ENCODE measurements at regions of chr20 and their contacts with region 1.

Region 1: GRCh38 chr20:38221119-38221589 is 39.4 kb downstream of the KIAA1755 start:
- DNase-seq: peak; percentile 70
- H3K4me3 Mint-ChIP-seq: no peak overlapping the region
- H3K27ac Mint-ChIP-seq: no peak overlapping the region
- H3K4me1 Mint-ChIP-seq: peaks cover 21% of the 10 kb centered on the region
- H3K27me3 Mint-ChIP-seq: no peaks in the 10 kb centered on the region
- CTCF ChIP-seq: peak; percentile 92

Region 2: DNA sequence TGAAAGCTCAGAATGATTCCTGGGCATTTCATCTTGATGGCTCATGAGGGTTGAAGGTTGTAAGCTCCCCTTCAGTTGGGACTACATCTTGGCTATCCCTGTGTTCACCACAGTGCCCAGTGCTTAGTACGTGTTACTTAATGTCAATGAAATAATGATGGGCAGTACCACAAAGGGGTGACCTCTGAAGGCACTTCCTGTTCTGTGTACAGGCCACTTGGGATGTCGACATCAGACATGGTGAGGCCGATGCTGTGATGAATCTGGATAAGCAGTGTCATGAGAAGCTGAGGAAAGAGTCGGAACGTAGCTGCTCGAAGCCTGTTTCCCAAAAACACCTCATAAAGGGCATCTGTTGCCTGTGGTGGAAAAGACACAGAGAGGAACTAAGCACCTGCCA is 1097.7 kb before region 1 on chr20:
- CTCF ChIA-PET with region 1: no interaction called
- POLR2A ChIA-PET with region 1: no interaction called
- intact Hi-C with region 1: no loop called
- DNase-seq: no peak
- H3K4me3 Mint-ChIP-seq: no peak overlapping the region
- H3K27ac Mint-ChIP-seq: no peak overlapping the region
- H3K4me1 Mint-ChIP-seq: no peaks in the 10 kb centered on the region
- H3K27me3 Mint-ChIP-seq: peaks cover 8% of the 10 kb centered on the region
- CTCF ChIP-seq: no peak

Region 3: GRCh38 chr20:38033310-38034107 is 187.6 kb before region 1 on chr20 and contains the starts of genes RPRD1B and TTI1:
- CTCF ChIA-PET with region 1: interaction called, 35 read pairs
- POLR2A ChIA-PET with region 1: interaction called, 4 read pairs
- intact Hi-C with region 1: no loop called
- DNase-seq: peak; percentile 92
- H3K4me3 Mint-ChIP-seq: peak within 1 kb of the TSS; percentile 82
- H3K27ac Mint-ChIP-seq: peak within 1 kb of the TSS; percentile 92
- H3K4me1 Mint-ChIP-seq: peaks cover 41% of the 10 kb centered on the region
- H3K27me3 Mint-ChIP-seq: no peaks in the 10 kb centered on the region
- CTCF ChIP-seq: no peak
- total RNA-seq, gene RPRD1B: 42.6 and 53.0 TPM in 2 replicates
- total RNA-seq, gene TTI1: 17.1 and 18.3 TPM in 2 replicates

Region 4: DNA sequence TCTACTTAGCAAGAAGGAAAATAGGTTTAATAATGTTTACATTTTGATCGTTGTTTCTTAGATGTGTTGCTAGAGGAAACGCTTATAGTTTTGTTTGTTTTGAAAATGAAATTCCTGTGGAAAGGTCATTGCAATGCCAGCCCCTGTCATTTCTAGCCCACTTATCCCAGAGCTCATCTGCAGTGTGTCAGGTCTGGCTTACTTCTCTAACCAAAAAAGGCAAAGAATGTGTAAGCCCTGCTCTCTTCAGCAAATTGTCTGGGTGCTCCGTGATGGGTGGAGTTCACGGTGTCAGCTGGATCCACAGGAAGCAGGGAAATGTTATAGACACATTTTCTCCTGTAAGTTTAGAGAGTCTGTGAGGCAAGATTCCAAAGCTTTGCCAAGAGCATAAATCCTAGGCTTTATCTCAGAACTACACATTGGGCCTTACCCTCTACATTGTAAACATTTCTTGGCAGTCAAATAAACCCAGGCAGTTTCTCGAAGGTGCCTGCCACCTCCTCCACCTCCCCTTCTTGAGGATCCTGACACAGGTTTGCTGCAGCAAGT is 136.7 kb before region 1 on chr20:
- CTCF ChIA-PET with region 1: interaction called, 75 read pairs
- POLR2A ChIA-PET with region 1: interaction called, 4 read pairs
- intact Hi-C with region 1: no loop called
- DNase-seq: no peak
- H3K4me3 Mint-ChIP-seq: no peak overlapping the region
- H3K27ac Mint-ChIP-seq: no peak overlapping the region
- H3K4me1 Mint-ChIP-seq: no peaks in the 10 kb centered on the region
- H3K27me3 Mint-ChIP-seq: no peaks in the 10 kb centered on the region
- CTCF ChIP-seq: no peak

Region 5: DNA sequence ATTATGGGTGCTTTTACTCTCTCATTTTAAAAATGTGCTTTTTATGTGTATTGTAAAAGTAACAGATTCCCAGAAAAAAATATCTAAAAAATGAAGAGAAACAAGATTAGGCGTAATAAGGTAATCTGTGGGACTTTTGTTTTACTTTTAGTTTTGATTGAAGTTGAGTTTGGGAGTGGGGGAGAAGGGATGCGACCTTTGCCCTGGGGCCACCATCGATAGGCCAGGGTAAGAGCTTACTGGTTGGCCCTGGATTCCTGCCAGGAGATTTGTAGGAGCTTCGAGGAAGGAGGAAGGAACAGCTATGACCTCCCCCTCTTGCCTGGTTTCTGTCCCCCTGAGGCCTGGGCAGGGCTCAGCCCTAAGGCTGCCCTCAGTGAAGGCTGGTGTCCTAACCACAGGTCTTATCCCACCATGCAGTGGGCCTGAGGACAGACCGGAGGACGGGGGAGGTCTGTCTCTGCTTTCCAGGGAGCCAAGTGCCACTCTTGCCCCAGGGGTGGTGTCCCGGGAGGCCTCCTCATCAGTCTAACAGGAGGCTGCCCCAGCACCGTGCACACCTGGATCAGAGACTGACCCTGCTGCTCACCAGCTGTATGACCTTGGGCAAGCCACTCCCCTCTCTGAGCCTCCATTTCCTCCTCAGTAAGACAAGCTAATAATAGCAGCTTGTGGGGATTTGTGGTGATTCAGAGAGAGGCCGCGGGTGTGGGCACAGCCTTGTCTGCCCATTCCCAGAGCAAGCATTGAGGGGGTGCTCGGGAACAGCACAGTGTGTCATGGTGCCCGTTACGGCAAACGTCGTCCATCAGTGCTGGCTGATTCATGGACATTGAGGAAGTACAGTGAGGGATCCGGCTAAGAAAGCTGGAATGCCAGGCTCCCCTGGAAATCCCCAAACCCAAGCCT is 77.3 kb before region 1 on chr20:
- CTCF ChIA-PET with region 1: interaction called, 11 read pairs
- POLR2A ChIA-PET with region 1: interaction called, 3 read pairs
- intact Hi-C with region 1: no loop called
- DNase-seq: peak; percentile 97
- H3K4me3 Mint-ChIP-seq: peak overlapping the region; percentile 40
- H3K27ac Mint-ChIP-seq: peak overlapping the region; percentile 95
- H3K4me1 Mint-ChIP-seq: peaks cover 38% of the 10 kb centered on the region
- H3K27me3 Mint-ChIP-seq: no peaks in the 10 kb centered on the region
- CTCF ChIP-seq: no peak

Region 6: DNA sequence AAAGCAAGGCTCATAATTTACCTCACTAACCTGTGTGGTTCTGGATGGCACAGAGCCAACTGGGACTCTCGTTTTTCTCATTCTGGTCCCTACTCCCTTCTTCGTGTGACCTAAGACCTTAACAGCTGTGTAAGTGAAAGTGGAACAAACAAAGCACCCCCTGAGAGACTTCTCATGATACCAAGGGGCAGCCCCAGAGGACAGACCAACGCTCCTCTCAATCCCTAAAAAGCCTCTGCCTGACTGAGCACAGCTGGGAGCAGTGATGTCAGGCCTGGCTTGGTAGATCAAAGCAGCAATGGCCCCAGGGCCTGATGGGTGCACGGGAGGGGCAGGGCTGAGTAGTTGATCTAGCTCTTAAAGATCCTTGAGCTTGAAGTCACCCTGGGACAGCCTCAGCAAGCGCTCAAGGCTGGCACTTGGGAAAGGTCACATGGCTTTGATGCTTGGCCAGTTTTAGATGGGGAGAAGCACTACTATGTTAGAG is 39.9 kb before region 1 on chr20:
- CTCF ChIA-PET with region 1: interaction called, 13 read pairs
- POLR2A ChIA-PET with region 1: interaction called, 3 read pairs
- intact Hi-C with region 1: no loop called
- DNase-seq: no peak
- H3K4me3 Mint-ChIP-seq: no peak overlapping the region
- H3K27ac Mint-ChIP-seq: no peak overlapping the region
- H3K4me1 Mint-ChIP-seq: peaks cover 10% of the 10 kb centered on the region
- H3K27me3 Mint-ChIP-seq: no peaks in the 10 kb centered on the region
- CTCF ChIP-seq: no peak

Region 7: DNA sequence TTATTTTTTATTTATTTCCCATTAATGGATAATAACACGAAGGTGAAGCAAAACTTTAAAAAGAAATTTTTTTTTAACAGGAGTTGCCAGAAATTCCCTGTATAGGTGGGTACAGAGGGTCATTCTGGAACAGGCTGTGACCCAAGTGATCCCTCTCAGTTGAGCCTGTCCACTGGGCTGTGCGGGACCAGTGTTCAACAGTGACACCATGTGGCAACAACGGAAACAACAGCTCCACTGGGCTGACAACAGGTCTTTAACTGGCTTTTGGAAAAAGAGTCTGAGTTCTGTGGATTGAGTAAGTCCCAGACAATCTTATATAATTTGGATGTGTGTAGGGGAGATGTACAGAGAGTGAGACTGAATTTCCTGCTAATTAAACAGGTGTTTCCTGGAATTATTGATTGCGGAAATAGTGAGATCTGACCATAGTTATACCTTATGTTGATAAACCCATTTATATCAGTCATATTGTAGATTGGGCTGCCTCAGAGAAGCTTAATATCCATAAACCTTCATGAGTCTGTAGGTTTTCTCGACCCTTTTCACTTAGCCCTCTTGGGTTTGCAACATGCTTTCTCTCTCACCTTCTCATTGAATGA is 21.8 kb after region 1 on chr20:
- CTCF ChIA-PET with region 1: interaction called, 28 read pairs
- POLR2A ChIA-PET with region 1: no interaction called
- intact Hi-C with region 1: no loop called
- DNase-seq: peak; percentile 21
- H3K4me3 Mint-ChIP-seq: no peak overlapping the region
- H3K27ac Mint-ChIP-seq: no peak overlapping the region
- H3K4me1 Mint-ChIP-seq: no peaks in the 10 kb centered on the region
- H3K27me3 Mint-ChIP-seq: no peaks in the 10 kb centered on the region
- CTCF ChIP-seq: peak; percentile 53

Region 8: DNA sequence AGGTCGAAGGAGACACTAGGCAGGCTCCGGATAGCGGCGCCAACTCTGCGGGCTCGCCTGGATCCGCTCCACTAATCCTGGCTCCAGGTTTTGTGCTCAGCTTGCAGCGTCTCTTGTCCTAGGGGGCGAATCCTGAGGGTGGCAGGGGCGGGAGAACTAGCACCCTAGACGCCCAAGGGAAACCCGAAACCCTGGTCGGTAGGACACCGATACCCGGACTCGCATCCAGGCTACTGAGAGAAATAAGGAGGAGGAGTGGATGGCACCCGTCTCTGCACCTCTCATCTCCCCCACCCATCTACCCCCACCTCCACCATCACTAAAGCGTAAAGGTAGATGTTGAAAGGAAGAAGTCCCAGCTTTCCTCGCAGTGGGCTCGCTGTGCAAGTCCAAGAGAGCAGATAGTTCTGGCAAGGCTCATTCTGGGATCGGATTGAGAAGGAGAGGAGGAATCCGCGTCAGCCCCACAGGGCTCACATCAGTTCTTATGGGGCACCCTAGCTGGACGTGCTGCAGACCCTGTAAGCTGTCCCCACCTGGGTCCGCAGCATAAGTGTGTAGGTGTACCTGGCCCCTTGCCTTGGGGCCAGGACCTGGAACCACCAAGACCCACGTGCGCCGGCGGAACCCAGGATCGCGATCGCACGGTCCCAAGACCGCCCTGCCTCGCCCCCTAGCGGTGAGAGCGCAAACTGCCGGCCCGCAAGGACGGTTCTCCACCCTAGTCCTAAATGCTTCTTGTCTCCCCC is 510.0 kb after region 1 on chr20:
- CTCF ChIA-PET with region 1: no interaction called
- POLR2A ChIA-PET with region 1: no interaction called
- intact Hi-C with region 1: no loop called
- DNase-seq: peak; percentile 59
- H3K4me3 Mint-ChIP-seq: peak overlapping the region; percentile 52
- H3K27ac Mint-ChIP-seq: no peak overlapping the region
- H3K4me1 Mint-ChIP-seq: peaks cover 6% of the 10 kb centered on the region
- H3K27me3 Mint-ChIP-seq: peaks cover 93% of the 10 kb centered on the region
- CTCF ChIP-seq: peak; percentile 95